Colonic mucosa (tissue), 4 donors: ENCODE measurements at regions of chr4 and their contacts with region 1.

Region 1: GRCh38 chr4:169810325-169811323 is 52.9 kb upstream of the HPF1 start:
- DNase-seq: peak; percentile 57
- H3K4me3 ChIP-seq: no peak overlapping the region
- H3K27ac ChIP-seq: no peak overlapping the region
- H3K4me1 ChIP-seq: no peaks in the 10 kb centered on the region
- H3K27me3 ChIP-seq: no peaks in the 10 kb centered on the region
- CTCF ChIP-seq: peak; percentile 79

Region 2: DNA sequence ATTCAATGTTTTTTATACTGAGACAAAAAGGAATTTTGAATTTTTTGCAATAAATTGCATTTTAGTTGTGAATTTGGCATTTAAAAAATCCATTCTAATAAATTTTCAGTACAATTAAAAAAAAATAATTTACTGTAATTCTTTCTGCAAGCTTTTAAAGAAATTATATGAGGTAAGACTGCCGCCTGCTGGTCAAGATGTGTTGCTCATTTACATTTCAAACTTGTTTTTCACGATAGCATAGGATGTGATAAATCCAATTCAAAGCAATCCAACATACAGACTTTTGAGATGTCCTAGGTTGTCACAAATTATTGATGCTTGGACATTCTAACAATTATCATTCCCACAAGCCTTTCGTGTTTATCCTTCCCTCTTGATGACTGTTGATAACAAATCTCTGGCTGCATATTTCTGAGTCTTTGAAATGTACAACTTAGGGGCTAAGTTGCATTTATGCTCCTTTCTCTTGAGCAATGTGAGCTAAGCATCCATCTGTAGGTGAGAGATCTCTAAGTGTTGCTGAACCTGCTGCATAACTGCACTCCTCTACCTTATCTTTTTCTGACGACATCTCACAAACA is 237.2 kb after region 1 on chr4:
- intact Hi-C with region 1: loop called (anchors 5 kb)
- DNase-seq: peak; percentile 55
- H3K4me3 ChIP-seq: no peak overlapping the region
- H3K27ac ChIP-seq: no peak overlapping the region
- H3K4me1 ChIP-seq: no peaks in the 10 kb centered on the region
- H3K27me3 ChIP-seq: no peaks in the 10 kb centered on the region
- CTCF ChIP-seq: peak; percentile 62